ENCODE measurements at regions of chr22 and their contacts with region 1.

Region 1: DNA sequence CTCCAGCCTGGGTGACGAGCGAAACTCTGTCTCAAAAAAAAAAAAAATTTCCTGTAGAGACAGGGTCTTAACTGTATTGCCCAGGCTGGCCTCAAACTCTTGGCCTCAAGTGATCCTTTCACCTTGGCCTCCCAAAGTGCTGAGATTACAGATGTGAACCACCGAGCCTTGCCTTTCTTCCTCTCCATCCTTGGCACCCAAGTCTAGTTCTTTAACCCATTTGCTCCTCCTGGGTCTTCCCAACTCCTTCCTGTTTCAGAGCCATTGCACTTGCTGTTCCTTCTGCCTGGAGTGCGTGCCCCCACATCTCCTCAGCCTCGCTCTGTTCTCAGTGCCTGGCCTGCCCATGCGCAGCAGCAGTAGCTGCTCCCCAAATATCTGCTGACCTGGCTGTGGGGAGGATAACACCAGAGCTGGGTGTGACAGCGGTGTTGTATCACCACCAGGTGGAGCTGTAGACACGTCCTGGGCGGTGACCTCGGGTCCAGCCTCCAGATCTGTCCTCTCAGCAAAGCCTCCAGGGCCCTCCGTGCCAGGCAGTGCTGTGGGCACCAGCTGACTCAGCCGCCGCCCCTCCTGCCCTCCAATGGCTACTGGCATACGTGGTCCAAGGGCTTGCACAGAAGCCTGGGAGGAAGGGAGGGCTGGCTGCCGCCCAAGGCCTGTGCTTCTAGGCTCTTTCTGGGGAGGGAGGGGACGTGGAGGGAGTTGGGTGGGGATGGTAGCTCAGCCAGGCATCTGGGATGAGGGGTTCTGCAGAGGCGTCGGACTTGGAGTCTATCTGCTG is 22.0 kb downstream of the TEF start:
- DNase-seq: peak; percentile 58
- ATAC-seq: peak; percentile 97
- H3K4me3 ChIP-seq: no peak overlapping the region
- H3K27ac ChIP-seq: no peak overlapping the region
- H3K4me1 ChIP-seq: peaks cover 14% of the 10 kb centered on the region
- H3K27me3 ChIP-seq: no peaks in the 10 kb centered on the region
- CTCF ChIP-seq: peak; percentile 97 to 98 (median 97); a peak in 5 of 6 replicates
- EP300 ChIP-seq: no peak
- POLR2A ChIP-seq: no peak
- RAD21 ChIP-seq: peak; percentile 95

Region 2: GRCh38 chr22:41340357-41340756 is 63.4 kb before region 1 on chr22:
- CTCF ChIA-PET with region 1: no interaction called
- POLR2A ChIA-PET with region 1: no interaction called
- RAD21 ChIA-PET with region 1: no interaction called
- SMC1A ChIA-PET with region 1: no interaction called
- in situ Hi-C with region 1: no loop called
- intact Hi-C with region 1: no loop called
- DNase-seq: no peak
- ATAC-seq: no peak
- H3K4me3 ChIP-seq: no peak overlapping the region
- H3K27ac ChIP-seq: no peak overlapping the region
- H3K4me1 ChIP-seq: no peaks in the 10 kb centered on the region
- H3K27me3 ChIP-seq: no peaks in the 10 kb centered on the region
- CTCF ChIP-seq: no peak
- EP300 ChIP-seq: no peak
- POLR2A ChIP-seq: no peak
- RAD21 ChIP-seq: no peak

Region 3: GRCh38 chr22:41381329-41382097 is 22.2 kb before region 1 on chr22 and contains the start of gene TEF:
- CTCF ChIA-PET with region 1: interaction called, 6 read pairs
- POLR2A ChIA-PET with region 1: interaction called, 3 read pairs
- RAD21 ChIA-PET with region 1: interaction called, 18 read pairs
- SMC1A ChIA-PET with region 1: interaction called, 3 read pairs
- in situ Hi-C with region 1: no loop called
- intact Hi-C with region 1: no loop called
- DNase-seq: peak; percentile 91
- ATAC-seq: peak; percentile 97
- H3K4me3 ChIP-seq: peak within 1 kb of the TSS; percentile 90
- H3K27ac ChIP-seq: peak within 1 kb of the TSS; percentile 74
- H3K4me1 ChIP-seq: peaks cover 7% of the 10 kb centered on the region
- H3K27me3 ChIP-seq: no peaks in the 10 kb centered on the region
- CTCF ChIP-seq: no peak
- EP300 ChIP-seq: no peak
- POLR2A ChIP-seq: peak; percentile 67
- RAD21 ChIP-seq: no peak
- polyA plus RNA-seq, gene TEF: 0.23 to 0.27 TPM

Region 4: GRCh38 chr22:41458161-41458728 is 54.5 kb after region 1 on chr22:
- CTCF ChIA-PET with region 1: interaction called, 11 read pairs
- POLR2A ChIA-PET with region 1: interaction called, 3 read pairs
- RAD21 ChIA-PET with region 1: interaction called, 3 read pairs
- SMC1A ChIA-PET with region 1: interaction called, 9 read pairs
- in situ Hi-C with region 1: no loop called
- intact Hi-C with region 1: no loop called
- DNase-seq: no peak
- ATAC-seq: no peak
- H3K4me3 ChIP-seq: no peak overlapping the region
- H3K27ac ChIP-seq: no peak overlapping the region
- H3K4me1 ChIP-seq: no peaks in the 10 kb centered on the region
- H3K27me3 ChIP-seq: no peaks in the 10 kb centered on the region
- CTCF ChIP-seq: no peak
- EP300 ChIP-seq: no peak
- POLR2A ChIP-seq: no peak
- RAD21 ChIP-seq: no peak

Region 5: DNA sequence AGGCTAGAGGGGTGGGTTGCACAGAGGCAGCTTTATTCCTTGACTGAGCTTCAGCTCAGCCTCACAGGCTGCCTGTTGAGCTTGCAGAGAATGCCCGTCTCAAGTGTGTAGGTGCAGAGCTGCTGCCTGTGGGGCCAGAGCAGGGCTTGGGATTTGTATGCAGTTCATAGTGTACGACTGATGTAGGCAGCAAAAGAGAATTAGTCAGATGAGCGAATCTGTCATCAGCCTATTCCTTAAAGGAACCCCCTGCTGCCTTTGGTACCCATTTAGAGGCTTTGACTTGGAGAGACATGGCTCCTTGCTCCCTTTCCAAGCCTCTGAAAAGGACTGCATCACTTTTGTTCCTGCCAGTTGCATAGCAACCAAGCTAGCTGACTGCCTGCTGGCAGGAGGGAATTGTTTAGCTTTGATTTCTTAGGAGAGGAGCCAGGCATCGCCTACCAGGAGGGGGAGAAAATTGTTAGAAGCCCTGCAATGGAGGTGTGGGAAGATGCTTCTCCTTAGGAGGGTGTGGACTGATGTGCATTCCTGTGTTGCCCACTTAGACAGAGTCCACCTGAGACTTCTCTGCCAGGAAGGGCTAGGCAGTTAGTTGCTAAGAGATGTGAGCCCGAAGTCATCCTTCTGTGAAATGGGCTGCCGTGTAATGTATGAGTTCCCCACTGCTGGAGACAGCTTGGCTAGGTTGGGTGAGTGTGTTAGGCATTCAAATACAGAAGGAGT is 76.1 kb after region 1 on chr22:
- CTCF ChIA-PET with region 1: interaction called, 26 read pairs
- POLR2A ChIA-PET with region 1: no interaction called
- RAD21 ChIA-PET with region 1: interaction called, 19 read pairs
- SMC1A ChIA-PET with region 1: interaction called, 12 read pairs
- in situ Hi-C with region 1: no loop called
- intact Hi-C with region 1: no loop called
- DNase-seq: no peak
- ATAC-seq: no peak; the same call in 2 of the 3 replicates
- H3K4me3 ChIP-seq: no peak overlapping the region
- H3K27ac ChIP-seq: peak overlapping the region; percentile 52
- H3K4me1 ChIP-seq: peaks cover 60% of the 10 kb centered on the region
- H3K27me3 ChIP-seq: no peaks in the 10 kb centered on the region
- CTCF ChIP-seq: no peak
- EP300 ChIP-seq: no peak
- POLR2A ChIP-seq: no peak
- RAD21 ChIP-seq: no peak

Region 6: DNA sequence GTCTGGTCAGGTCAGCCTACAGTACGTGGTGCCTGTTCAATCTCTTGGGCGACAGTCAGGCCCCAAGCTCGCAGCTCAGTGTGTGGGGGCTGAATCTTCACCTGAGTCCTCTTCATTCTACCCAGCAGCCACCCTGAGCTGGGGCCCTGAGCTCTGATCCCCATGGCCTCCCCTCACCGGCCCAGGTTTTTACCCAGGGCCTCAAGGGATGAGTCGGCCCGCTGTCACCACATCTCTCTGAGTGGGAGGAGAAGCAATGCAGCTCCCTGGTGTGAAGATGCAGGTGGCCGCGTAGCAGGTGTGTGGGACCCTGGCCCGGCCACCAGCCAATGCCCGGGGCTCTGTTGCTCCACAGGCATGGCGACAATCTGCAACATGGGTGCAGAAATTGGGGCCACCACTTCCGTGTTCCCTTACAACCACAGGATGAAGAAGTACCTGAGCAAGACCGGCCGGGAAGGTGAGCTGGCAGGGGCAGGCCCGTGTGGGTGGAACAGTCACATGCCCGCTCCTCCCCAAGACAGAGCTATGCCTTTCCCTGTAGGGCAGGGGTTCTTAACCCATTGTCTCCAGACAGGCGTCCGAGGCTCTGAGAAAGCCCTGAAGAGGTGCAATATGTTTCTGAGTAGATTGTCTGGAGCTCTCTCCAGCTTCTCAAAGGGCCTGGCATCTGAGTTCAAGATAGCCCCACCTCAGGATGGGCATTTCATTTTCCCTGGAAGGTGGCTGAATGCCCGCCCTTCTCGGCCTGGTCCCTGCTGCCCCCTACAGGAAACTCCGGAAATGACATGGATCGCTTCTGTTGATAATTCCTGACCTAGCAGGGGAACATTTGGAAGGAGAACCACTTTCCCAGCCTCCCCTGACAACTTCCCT is 113.7 kb after region 1 on chr22:
- CTCF ChIA-PET with region 1: interaction called, 141 read pairs
- POLR2A ChIA-PET with region 1: interaction called, 3 read pairs
- RAD21 ChIA-PET with region 1: interaction called, 67 read pairs
- SMC1A ChIA-PET with region 1: interaction called, 57 read pairs
- in situ Hi-C with region 1: loop called (anchors 5 kb)
- intact Hi-C with region 1: loop called (anchors 1 kb)
- DNase-seq: no peak
- ATAC-seq: peak; percentile 51
- H3K4me3 ChIP-seq: no peak overlapping the region
- H3K27ac ChIP-seq: no peak overlapping the region
- H3K4me1 ChIP-seq: no peaks in the 10 kb centered on the region
- H3K27me3 ChIP-seq: no peaks in the 10 kb centered on the region
- CTCF ChIP-seq: peak; percentile 72 to 81 (median 81)
- EP300 ChIP-seq: no peak
- POLR2A ChIP-seq: no peak
- RAD21 ChIP-seq: peak; percentile 86

Region 7: DNA sequence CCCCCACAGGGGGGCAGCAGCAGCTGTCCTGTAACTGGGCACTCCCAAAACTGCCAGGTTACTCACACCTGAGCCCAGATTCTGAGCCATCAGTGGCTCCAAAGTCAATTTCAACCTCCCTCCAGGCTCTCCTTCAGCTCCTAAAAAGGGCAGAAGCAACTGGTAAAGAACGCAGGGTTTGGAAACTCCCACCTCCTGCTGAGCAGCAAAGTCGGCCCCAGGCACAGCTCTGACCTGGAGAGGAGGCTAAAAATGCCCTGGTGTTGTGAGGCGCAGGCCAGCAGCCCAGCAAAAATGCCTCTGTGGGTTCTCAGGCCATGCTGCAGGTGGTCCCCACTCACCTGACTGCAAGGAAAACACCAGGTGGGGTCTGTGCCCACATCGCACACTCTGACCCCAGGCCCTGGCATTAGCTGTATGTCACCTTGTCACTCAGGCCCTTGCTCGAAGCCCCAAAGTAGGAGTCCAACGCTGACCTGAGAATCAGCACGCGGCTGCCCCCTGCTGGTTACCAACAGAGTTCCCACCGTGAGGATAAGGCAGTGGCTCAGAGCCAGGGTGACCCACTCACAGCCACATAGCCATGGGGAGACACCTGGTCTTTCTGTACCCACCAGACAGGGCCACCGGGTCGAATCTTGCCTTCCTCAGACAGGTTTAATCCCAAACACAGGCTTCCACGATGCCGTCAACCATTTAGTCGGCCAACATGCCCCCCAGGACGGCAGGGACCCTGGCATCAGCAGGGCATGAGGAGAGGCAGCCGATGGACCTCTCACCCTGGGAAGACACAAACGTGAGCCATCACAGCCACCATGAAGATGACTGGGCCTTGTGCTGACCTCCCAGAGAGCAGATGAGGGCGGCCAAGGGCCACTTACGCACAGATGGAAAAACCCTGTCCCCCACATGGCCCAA is 129.4 kb after region 1 on chr22:
- CTCF ChIA-PET with region 1: interaction called, 105 read pairs
- POLR2A ChIA-PET with region 1: no interaction called
- RAD21 ChIA-PET with region 1: interaction called, 46 read pairs
- SMC1A ChIA-PET with region 1: interaction called, 6 read pairs
- in situ Hi-C with region 1: no loop called
- intact Hi-C with region 1: loop called (anchors 1 kb)
- DNase-seq: no peak
- ATAC-seq: peak; percentile 94
- H3K4me3 ChIP-seq: no peak overlapping the region
- H3K27ac ChIP-seq: no peak overlapping the region
- H3K4me1 ChIP-seq: no peaks in the 10 kb centered on the region
- H3K27me3 ChIP-seq: no peaks in the 10 kb centered on the region
- CTCF ChIP-seq: peak; percentile 82 to 84 (median 82)
- EP300 ChIP-seq: no peak
- POLR2A ChIP-seq: peak; percentile 36
- RAD21 ChIP-seq: peak; percentile 59

Region 8: DNA sequence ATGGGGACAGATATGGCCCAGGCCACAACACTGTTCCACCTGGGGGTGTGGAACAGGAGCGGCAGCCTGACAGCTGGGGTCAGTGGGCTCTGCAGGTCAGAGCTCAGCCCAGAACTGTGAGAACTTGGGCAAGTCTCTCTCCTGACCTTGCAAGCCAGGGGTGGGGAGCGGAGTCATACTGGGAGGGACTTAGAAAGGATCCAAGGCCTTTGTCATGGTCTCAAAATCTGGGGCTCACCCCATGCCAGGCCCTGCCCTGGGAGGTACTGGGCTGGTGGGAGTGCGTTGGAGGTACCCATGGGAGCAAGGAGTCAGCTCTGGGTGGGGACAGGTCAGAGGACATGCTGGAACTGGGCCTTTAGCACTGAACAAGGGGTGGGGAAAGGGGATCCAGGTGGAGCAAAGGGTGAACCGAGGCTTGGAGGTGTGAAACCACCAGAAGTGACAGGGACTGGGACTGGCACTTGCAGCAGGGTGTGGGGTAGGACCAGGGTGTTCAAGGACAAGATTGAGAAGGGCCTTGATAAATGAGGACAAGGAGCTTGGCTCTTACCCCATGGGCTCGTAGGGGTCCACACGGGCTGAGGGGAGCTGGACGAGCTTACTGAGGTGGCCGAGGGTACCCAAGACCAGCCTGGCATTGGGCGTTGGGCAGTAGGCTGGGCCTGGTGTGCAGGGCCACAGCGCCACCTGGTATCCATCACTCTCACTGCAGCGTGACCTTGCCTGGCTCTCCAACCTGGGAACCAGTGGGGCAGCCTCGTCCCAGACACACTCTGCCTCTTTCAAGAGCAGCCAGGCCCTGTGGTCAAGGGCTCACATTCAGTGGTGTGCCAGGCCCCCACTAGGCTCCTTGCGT is 193.3 kb after region 1 on chr22:
- CTCF ChIA-PET with region 1: interaction called, 13 read pairs
- POLR2A ChIA-PET with region 1: no interaction called
- RAD21 ChIA-PET with region 1: interaction called, 11 read pairs
- SMC1A ChIA-PET with region 1: interaction called, 9 read pairs
- in situ Hi-C with region 1: no loop called
- intact Hi-C with region 1: no loop called
- DNase-seq: no peak
- ATAC-seq: peak; percentile 98
- H3K4me3 ChIP-seq: no peak overlapping the region
- H3K27ac ChIP-seq: no peak overlapping the region
- H3K4me1 ChIP-seq: no peaks in the 10 kb centered on the region
- H3K27me3 ChIP-seq: no peaks in the 10 kb centered on the region
- CTCF ChIP-seq: peak; percentile 63 to 83 (median 74)
- EP300 ChIP-seq: no peak
- POLR2A ChIP-seq: no peak
- RAD21 ChIP-seq: peak; percentile 58